ENCODE measurements at regions of chr1 and their contacts with region 1.

Region 1: DNA sequence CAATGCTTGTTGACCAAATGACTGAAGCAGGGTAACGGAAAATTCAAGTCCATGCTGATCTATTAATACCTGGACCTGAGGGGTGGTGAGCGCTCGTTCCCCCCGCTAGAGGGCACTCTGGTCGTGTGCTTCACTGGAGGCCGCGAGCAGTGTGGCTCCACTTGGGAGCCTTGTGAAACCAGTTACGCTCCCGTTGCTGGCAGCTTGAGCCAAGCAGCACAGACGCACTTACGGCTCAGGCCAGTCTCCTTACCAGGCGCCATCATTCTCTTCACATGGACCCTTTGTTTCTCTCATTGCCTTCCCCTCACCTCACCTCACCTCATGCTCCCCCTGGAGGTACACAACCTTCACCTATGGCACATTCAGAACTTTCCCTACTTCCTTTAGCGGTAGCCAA is 49.7 kb upstream of the TSPAN2 start:
- DNase-seq: peak; percentile 81 to 89 (median 84)
- ATAC-seq: peak; percentile 98
- H3K4me3 ChIP-seq: no peak overlapping the region
- H3K4me1 ChIP-seq: no peaks in the 10 kb centered on the region
- CTCF ChIP-seq: peak; percentile 85

Region 2: GRCh38 chr1:115469703-115470476 is 330.9 kb after region 1 on chr1:
- intact Hi-C with region 1: loop called (anchors 5 kb)
- DNase-seq: peak in 2 of 3 donors; percentile 55 to 67
- ATAC-seq: peak; percentile 84
- H3K4me3 ChIP-seq: no peak overlapping the region
- H3K4me1 ChIP-seq: peaks cover 3% of the 10 kb centered on the region
- CTCF ChIP-seq: peak; percentile 79

Measured in mucosa of descending colon (tissue), 3 donors.